GM12878 (cell line): ENCODE measurements at regions of chr10 and their contacts with region 1.

Region 1: GRCh38 chr10:105844241-105844640 is 1203.2 kb downstream of the SORCS3 start:
- DNase-seq: no peak
- ATAC-seq: no peak
- H3K4me3 ChIP-seq: no peak overlapping the region
- H3K27ac ChIP-seq: no peak overlapping the region
- H3K4me1 ChIP-seq: peaks cover 2% of the 10 kb centered on the region; the same call in 1 of the 2 replicates
- H3K27me3 ChIP-seq: no peaks in the 10 kb centered on the region
- CTCF ChIP-seq: no peak
- EP300 ChIP-seq: no peak
- POLR2A ChIP-seq: no peak
- RAD21 ChIP-seq: no peak

Region 2: DNA sequence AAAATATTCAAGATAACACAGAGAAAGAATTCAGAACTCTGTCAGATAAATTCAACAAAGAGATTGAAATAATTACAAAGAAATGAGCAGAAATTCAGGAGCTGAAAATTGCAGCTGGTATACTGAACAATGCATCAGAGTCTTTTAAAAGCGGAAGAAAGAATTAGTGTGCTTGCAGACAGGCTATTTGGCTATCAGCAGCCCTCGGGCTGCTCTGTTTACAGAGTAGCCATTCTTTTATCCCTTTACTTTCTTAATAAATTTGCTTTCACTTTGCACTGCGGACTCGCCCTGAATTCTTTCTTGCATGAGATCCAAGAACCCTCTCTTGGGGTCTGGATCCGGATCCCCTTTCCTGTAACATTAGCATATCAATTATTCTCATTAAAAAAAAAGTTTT is 163.2 kb before region 1 on chr10:
- CTCF ChIA-PET with region 1: no interaction called
- POLR2A ChIA-PET with region 1: no interaction called
- RAD21 ChIA-PET with region 1: no interaction called
- SMC1A ChIA-PET with region 1: no interaction called
- in situ Hi-C with region 1: no loop called
- intact Hi-C with region 1: no loop called
- DNase-seq: no peak
- ATAC-seq: no peak
- H3K4me3 ChIP-seq: no peak overlapping the region
- H3K27ac ChIP-seq: no peak overlapping the region
- H3K4me1 ChIP-seq: no peaks in the 10 kb centered on the region
- H3K27me3 ChIP-seq: no peaks in the 10 kb centered on the region
- CTCF ChIP-seq: no peak
- EP300 ChIP-seq: no peak
- POLR2A ChIP-seq: no peak
- RAD21 ChIP-seq: no peak

Region 3: DNA sequence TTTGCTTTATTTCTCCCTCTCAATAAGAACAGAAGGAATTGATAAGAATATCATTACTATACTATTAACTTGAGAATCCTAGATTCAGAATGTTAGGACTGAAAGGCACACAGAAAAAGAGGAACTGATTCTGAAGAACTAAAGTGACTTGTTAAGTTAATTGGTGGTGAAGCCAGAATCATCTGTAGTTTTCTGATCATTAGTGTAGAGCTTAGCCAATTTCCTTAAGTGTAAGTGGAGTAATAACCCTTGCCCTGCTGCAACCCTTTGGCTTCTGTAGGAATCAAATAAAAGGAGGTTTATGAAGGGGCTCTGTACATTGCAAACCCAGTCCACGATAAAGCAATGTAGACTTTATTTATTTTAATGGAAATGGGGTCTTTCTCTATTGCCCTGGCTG is 17.1 kb before region 1 on chr10:
- CTCF ChIA-PET with region 1: interaction called, 13 read pairs
- POLR2A ChIA-PET with region 1: interaction called, 3 read pairs
- RAD21 ChIA-PET with region 1: interaction called, 12 read pairs
- SMC1A ChIA-PET with region 1: interaction called, 21 read pairs
- in situ Hi-C with region 1: no loop called
- intact Hi-C with region 1: no loop called
- DNase-seq: no peak
- ATAC-seq: peak; percentile 97
- H3K4me3 ChIP-seq: no peak overlapping the region
- H3K27ac ChIP-seq: no peak overlapping the region
- H3K4me1 ChIP-seq: no peaks in the 10 kb centered on the region
- H3K27me3 ChIP-seq: no peaks in the 10 kb centered on the region
- CTCF ChIP-seq: no peak
- EP300 ChIP-seq: peak in 1 of 2 experiments; percentile 58; a peak in 2 of 4 replicates
- POLR2A ChIP-seq: no peak
- RAD21 ChIP-seq: no peak

Region 4: GRCh38 chr10:105868935-105869334 is 24.7 kb after region 1 on chr10:
- CTCF ChIA-PET with region 1: no interaction called
- POLR2A ChIA-PET with region 1: no interaction called
- RAD21 ChIA-PET with region 1: no interaction called
- SMC1A ChIA-PET with region 1: interaction called, 11 read pairs
- in situ Hi-C with region 1: no loop called
- intact Hi-C with region 1: no loop called
- DNase-seq: no peak
- ATAC-seq: no peak
- H3K4me3 ChIP-seq: no peak overlapping the region
- H3K27ac ChIP-seq: no peak overlapping the region
- H3K4me1 ChIP-seq: no peaks in the 10 kb centered on the region
- H3K27me3 ChIP-seq: no peaks in the 10 kb centered on the region
- CTCF ChIP-seq: no peak
- EP300 ChIP-seq: no peak
- POLR2A ChIP-seq: no peak
- RAD21 ChIP-seq: no peak

Region 5: GRCh38 chr10:106000721-106001120 is 156.5 kb after region 1 on chr10:
- CTCF ChIA-PET with region 1: no interaction called
- POLR2A ChIA-PET with region 1: no interaction called
- RAD21 ChIA-PET with region 1: no interaction called
- SMC1A ChIA-PET with region 1: no interaction called
- in situ Hi-C with region 1: no loop called
- intact Hi-C with region 1: no loop called
- DNase-seq: no peak
- ATAC-seq: no peak
- H3K4me3 ChIP-seq: no peak overlapping the region
- H3K27ac ChIP-seq: no peak overlapping the region
- H3K4me1 ChIP-seq: no peaks in the 10 kb centered on the region
- H3K27me3 ChIP-seq: no peaks in the 10 kb centered on the region
- CTCF ChIP-seq: no peak
- EP300 ChIP-seq: no peak
- POLR2A ChIP-seq: no peak
- RAD21 ChIP-seq: no peak

Region 6: DNA sequence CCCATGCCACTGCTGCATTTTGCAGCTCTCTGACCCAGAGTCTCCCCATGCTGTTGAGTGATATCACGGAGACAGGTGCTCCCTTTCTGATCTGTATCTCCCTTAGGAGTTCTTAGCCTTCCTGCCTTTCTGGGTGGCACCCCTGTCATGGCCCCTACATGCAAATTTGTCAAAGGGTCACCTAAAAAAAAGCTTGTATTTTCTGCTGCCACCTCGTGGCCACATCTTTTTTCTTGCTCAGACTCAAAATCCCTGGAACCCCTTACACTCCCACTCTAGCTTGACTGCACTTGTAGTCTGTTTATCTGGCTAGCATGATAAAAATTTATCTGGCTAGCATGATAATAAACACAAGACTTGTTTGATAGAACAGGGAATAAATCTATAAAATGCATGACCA is 511.2 kb after region 1 on chr10:
- CTCF ChIA-PET with region 1: no interaction called
- POLR2A ChIA-PET with region 1: no interaction called
- RAD21 ChIA-PET with region 1: no interaction called
- SMC1A ChIA-PET with region 1: no interaction called
- in situ Hi-C with region 1: no loop called
- intact Hi-C with region 1: no loop called
- DNase-seq: no peak
- ATAC-seq: peak; percentile 52; the same call in 2 of the 3 replicates
- H3K4me3 ChIP-seq: no peak overlapping the region
- H3K27ac ChIP-seq: no peak overlapping the region
- H3K4me1 ChIP-seq: no peaks in the 10 kb centered on the region
- H3K27me3 ChIP-seq: no peaks in the 10 kb centered on the region
- CTCF ChIP-seq: peak; percentile 12 to 26 (median 19); a peak in 2 of 6 replicates
- EP300 ChIP-seq: no peak
- POLR2A ChIP-seq: no peak
- RAD21 ChIP-seq: peak; percentile 12; the same call in 1 of the 2 replicates